Naive thymus-derived CD4-positive, alpha-beta T cell (primary cell): ENCODE measurements at regions of chr5 and their contacts with region 1.

Region 1: DNA sequence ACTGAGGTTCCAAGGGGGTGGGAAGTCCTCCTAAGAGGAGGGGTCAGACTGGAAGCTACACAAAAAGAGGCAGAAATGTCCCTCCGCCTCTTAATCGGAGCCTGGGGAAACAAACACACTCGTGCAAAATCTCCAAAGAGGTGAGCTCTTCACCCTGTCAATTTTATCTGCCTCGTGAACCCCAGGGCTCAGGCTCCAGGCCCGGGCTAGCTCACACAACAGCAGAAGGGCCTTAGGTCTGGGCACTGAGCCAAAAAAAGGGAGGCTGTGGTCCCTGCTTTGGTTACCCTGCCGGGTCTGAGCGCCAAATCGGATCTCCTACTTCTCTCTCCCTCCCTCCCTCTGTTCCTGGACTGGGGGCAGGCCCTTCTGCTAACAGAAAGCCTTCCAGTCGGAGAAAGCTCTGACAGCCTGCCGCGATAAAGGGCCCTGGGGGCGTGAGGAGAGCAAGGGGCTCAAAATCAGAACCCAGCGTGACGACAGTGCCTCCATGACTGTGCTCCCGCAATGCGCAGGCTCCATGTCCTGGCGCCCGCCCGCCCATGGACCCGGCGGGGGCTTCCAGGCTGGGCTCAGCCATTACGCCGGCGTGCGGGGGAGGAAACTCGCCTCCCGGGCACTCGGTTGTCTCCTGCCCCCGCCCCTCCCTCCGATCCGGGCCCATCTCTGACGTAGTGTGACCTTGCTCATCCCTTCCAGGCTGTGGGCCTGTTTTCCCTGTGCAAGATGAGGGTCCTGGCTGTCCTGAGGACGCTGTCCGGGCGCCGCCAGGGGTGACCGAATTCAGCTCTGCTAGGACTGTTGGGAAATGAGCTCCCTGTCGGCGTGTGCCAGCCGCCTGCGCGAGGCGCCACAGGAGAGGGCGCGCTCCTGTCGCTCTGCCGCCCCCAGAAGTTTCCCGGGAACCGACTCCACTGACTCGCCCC is 865 bp upstream of the SLC22A4 start:
- DNase-seq: peak; percentile 8 to 79 (median 35)
- ATAC-seq: peak; percentile 54
- H3K4me3 ChIP-seq: peak overlapping the region; percentile 69
- H3K4me3 Mint-ChIP-seq: peak overlapping the region; percentile 80 to 95 (median 90)
- H3K27ac ChIP-seq: peak overlapping the region; percentile 43
- H3K27ac Mint-ChIP-seq: peak overlapping the region in 3 of 9 donors; percentile 36 to 75 (median 43)
- H3K4me1 ChIP-seq: peaks cover 0 to 8% of the 10 kb centered on the region in 2 donors
- H3K4me1 Mint-ChIP-seq: peaks cover 5 to 26% (median 9%) of the 10 kb centered on the region in 7 donors
- H3K27me3 ChIP-seq: no peaks in the 10 kb centered on the region
- H3K27me3 Mint-ChIP-seq: peaks cover 9 to 32% (median 19%) of the 10 kb centered on the region in 5 donors

Region 2: GRCh38 chr5:132369474-132370180 is 76.3 kb after region 1 on chr5 and contains the start of gene SLC22A5:
- CTCF ChIA-PET with region 1: no interaction called
- POLR2A ChIA-PET with region 1: no interaction called
- intact Hi-C with region 1: loop called (anchors 1 to 2 kb)
- DNase-seq: peak; percentile 65 to 79 (median 74)
- ATAC-seq: peak; percentile 93
- H3K4me3 ChIP-seq: peak within 1 kb of the TSS; percentile 72
- H3K4me3 Mint-ChIP-seq: peak within 1 kb of the TSS; percentile 76 to 92 (median 88)
- H3K27ac ChIP-seq: peak within 1 kb of the TSS; percentile 91
- H3K27ac Mint-ChIP-seq: peak within 1 kb of the TSS; percentile 64 to 93 (median 90)
- H3K4me1 ChIP-seq: peaks cover 7 to 11% of the 10 kb centered on the region in 2 donors
- H3K4me1 Mint-ChIP-seq: peaks cover 12 to 40% (median 31%) of the 10 kb centered on the region in 7 donors
- H3K27me3 ChIP-seq: no peaks in the 10 kb centered on the region
- H3K27me3 Mint-ChIP-seq: no peaks in the 10 kb centered on the region
- total RNA-seq, gene SLC22A5: 6.8 to 10.8 (median 8.0) TPM

Region 3: DNA sequence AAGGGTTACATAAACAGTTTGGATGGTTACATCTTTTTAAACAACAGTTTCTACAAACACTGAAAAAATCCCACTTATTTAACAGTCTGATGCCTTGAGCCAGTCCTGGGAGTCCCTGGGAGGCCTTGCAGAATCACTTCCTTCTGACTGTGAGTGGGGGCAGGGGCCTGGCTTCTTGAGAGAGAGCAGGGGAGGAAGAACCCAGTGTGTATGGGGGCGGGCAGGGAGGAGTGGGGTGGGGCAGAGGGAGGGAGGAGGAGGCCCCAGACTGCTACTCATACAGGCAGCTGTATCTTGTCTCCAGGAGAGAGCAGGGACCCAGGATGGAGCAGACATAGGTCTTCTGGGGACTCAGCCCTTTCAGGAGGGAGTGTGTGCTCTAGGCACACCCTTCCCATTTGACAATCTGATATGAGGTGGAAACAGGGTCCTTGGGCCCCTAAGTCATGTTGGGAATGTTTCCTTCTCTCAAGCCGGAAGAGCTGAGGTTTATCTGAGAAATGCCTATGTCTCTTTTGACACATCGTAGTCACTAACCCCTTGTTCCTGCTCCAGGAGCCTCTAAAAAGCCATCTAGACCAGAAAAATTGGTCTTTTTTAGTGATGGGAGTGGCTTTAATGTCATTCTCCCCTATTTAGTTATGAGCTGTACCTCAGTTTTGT is 144.4 kb after region 1 on chr5:
- CTCF ChIA-PET with region 1: no interaction called
- POLR2A ChIA-PET with region 1: no interaction called
- intact Hi-C with region 1: no loop called
- DNase-seq: peak in 8 of 9 donors; percentile 36 to 66 (median 56)
- ATAC-seq: peak; percentile 88
- H3K4me3 ChIP-seq: peak overlapping the region; percentile 25
- H3K4me3 Mint-ChIP-seq: peak overlapping the region; percentile 60 to 79 (median 68)
- H3K27ac ChIP-seq: peak overlapping the region; percentile 67
- H3K27ac Mint-ChIP-seq: peak overlapping the region; percentile 79 to 93 (median 85)
- H3K4me1 ChIP-seq: peaks cover 61 to 86% of the 10 kb centered on the region in 2 donors
- H3K4me1 Mint-ChIP-seq: peaks cover 68 to 96% (median 83%) of the 10 kb centered on the region in 7 donors
- H3K27me3 ChIP-seq: no peaks in the 10 kb centered on the region
- H3K27me3 Mint-ChIP-seq: no peaks in the 10 kb centered on the region

Region 4: GRCh38 chr5:132495667-132496190 is 202.4 kb after region 1 on chr5:
- CTCF ChIA-PET with region 1: interaction called, 4 read pairs
- POLR2A ChIA-PET with region 1: no interaction called
- intact Hi-C with region 1: loop called (anchors 5 to 10 kb)
- DNase-seq: peak in 7 of 9 donors; percentile 42 to 79 (median 54)
- ATAC-seq: peak; percentile 48
- H3K4me3 ChIP-seq: peak overlapping the region; percentile 91
- H3K4me3 Mint-ChIP-seq: peak overlapping the region; percentile 86 to 99 (median 97)
- H3K27ac ChIP-seq: peak overlapping the region; percentile 99
- H3K27ac Mint-ChIP-seq: peak overlapping the region; percentile 90 to 99 (median 97)
- H3K4me1 ChIP-seq: peaks cover 48 to 57% of the 10 kb centered on the region in 2 donors
- H3K4me1 Mint-ChIP-seq: peaks cover 36 to 79% (median 68%) of the 10 kb centered on the region in 7 donors
- H3K27me3 ChIP-seq: no peaks in the 10 kb centered on the region
- H3K27me3 Mint-ChIP-seq: no peaks in the 10 kb centered on the region

Region 5: DNA sequence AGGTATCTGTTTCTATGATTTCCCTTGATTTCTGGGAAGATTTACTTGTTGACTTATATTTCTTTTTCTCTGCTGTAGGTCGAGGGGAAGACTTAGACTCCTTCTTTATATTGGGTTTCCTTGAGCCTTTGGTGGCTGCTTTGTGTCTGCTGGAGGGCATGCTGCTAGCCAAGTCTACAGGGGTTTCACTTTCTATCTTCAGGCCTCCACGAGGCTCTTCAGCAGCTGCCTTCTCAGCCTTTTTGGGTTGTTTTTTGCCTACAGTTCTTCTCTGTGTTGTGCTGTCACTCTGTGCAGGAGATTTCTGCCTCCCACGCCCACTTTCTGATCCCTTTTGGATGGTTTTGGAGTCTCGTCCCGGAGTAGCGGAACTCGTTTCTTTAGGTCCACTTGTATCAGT is 603.4 kb after region 1 on chr5:
- CTCF ChIA-PET with region 1: no interaction called
- POLR2A ChIA-PET with region 1: no interaction called
- intact Hi-C with region 1: no loop called
- DNase-seq: no peak
- ATAC-seq: no peak
- H3K4me3 ChIP-seq: no peak overlapping the region
- H3K4me3 Mint-ChIP-seq: no peak overlapping the region
- H3K27ac ChIP-seq: no peak overlapping the region
- H3K27ac Mint-ChIP-seq: peak overlapping the region in 3 of 9 donors; percentile 12 to 60 (median 38)
- H3K4me1 ChIP-seq: no peaks in the 10 kb centered on the region
- H3K4me1 Mint-ChIP-seq: peaks cover 0 to 13% (median 11%) of the 10 kb centered on the region in 7 donors
- H3K27me3 ChIP-seq: no peaks in the 10 kb centered on the region
- H3K27me3 Mint-ChIP-seq: no peaks in the 10 kb centered on the region

Region 6: GRCh38 chr5:133025804-133026663 is 732.7 kb after region 1 on chr5 and contains the start of gene ZCCHC10:
- CTCF ChIA-PET with region 1: no interaction called
- POLR2A ChIA-PET with region 1: no interaction called
- intact Hi-C with region 1: loop called (anchors 5 to 10 kb)
- DNase-seq: peak; percentile 75 to 90 (median 84)
- ATAC-seq: peak; percentile 100
- H3K4me3 ChIP-seq: peak within 1 kb of the TSS; percentile 99
- H3K4me3 Mint-ChIP-seq: peak within 1 kb of the TSS; percentile 92 to 98 (median 94)
- H3K27ac ChIP-seq: peak within 1 kb of the TSS; percentile 96
- H3K27ac Mint-ChIP-seq: peak within 1 kb of the TSS; percentile 85 to 98 (median 94)
- H3K4me1 ChIP-seq: peaks cover 4% of the 10 kb centered on the region in 2 donors
- H3K4me1 Mint-ChIP-seq: peaks cover 14 to 37% (median 26%) of the 10 kb centered on the region in 7 donors
- H3K27me3 ChIP-seq: no peaks in the 10 kb centered on the region
- H3K27me3 Mint-ChIP-seq: peaks cover 0 to 8% (median 0%) of the 10 kb centered on the region in 5 donors
- total RNA-seq, gene ZCCHC10: 16.0 to 32.9 (median 18.2) TPM